Transverse colon (tissue), 4 donors: ENCODE measurements at regions of chr14 and their contacts with region 1.

Region 1: GRCh38 chr14:56422703-56423213 is 156.8 kb upstream of the TMEM260 start:
- DNase-seq: peak; percentile 31
- H3K4me3 ChIP-seq: no peak overlapping the region
- H3K27ac ChIP-seq: no peak overlapping the region
- H3K4me1 ChIP-seq: peaks cover 0 to 6% (median 2%) of the 10 kb centered on the region in 4 donors
- H3K27me3 ChIP-seq: no peaks in the 10 kb centered on the region
- CTCF ChIP-seq: peak; percentile 58 to 65 (median 59)
- EP300 ChIP-seq: no peak
- POLR2A ChIP-seq: no peak

Region 2: GRCh38 chr14:55731881-55732498 is 690.8 kb before region 1 on chr14:
- in situ Hi-C with region 1: no loop called
- intact Hi-C with region 1: loop called (anchors 2 kb)
- DNase-seq: peak; percentile 55
- H3K4me3 ChIP-seq: no peak overlapping the region
- H3K27ac ChIP-seq: no peak overlapping the region
- H3K4me1 ChIP-seq: peaks cover 0 to 15% (median 0%) of the 10 kb centered on the region in 4 donors
- H3K27me3 ChIP-seq: no peaks in the 10 kb centered on the region
- CTCF ChIP-seq: peak; percentile 52 to 62 (median 58)
- EP300 ChIP-seq: no peak
- POLR2A ChIP-seq: no peak

Region 3: GRCh38 chr14:56494167-56494787 is 71.5 kb after region 1 on chr14:
- in situ Hi-C with region 1: no loop called
- intact Hi-C with region 1: no loop called
- DNase-seq: no peak
- H3K4me3 ChIP-seq: no peak overlapping the region
- H3K27ac ChIP-seq: no peak overlapping the region
- H3K4me1 ChIP-seq: peaks cover 0 to 5% (median 2%) of the 10 kb centered on the region in 4 donors
- H3K27me3 ChIP-seq: no peaks in the 10 kb centered on the region
- CTCF ChIP-seq: no peak
- EP300 ChIP-seq: no peak
- POLR2A ChIP-seq: no peak